A673 (cell line): ENCODE measurements at regions of chr7 and their contacts with region 1.

Region 1: DNA sequence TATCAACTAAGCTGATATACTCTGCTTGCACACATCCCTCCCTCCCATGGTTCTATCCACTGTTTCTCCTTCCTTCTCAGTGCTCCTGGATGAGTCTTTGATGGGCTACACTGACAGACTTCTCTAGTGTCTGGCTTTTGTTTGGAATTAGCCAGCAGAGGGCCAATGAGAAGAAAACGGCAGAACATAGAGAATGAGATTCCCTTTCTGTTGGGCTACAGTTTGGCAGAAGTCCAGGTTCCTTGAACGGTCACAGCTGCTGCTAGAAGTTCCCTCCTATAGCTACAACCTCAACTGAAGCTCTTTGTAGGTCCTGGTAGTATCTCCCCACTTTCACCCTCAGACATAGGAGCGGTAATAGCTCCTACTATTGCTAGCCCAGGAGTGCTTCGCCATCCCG is 251.1 kb upstream of the LRRN3 start:
- DNase-seq: peak; percentile 79
- H3K4me3 ChIP-seq: no peak overlapping the region
- H3K27ac ChIP-seq: no peak overlapping the region
- H3K4me1 ChIP-seq: no peaks in the 10 kb centered on the region
- H3K27me3 ChIP-seq: peaks cover 27% of the 10 kb centered on the region
- CTCF ChIP-seq: peak; percentile 33; the same call in 1 of the 2 replicates

Region 2: DNA sequence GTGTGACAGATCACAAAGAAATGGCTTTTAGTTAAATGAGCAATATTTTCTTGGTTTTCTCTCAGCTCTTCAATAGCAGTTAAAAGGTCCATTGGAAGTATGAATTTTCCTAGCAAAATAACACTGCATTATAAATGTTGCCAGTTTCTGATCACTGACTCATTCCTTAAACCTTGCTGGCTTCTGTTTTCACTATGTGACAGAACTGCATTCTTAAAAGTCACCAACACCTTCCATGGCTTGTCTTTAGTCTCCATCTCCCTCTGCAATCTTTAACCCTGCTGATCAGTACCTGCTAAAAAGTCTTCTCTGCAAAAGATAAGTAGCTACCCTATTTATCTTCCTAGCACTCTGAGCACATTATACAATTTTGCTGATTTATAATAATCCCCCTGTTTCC is 154.0 kb before region 1 on chr7:
- CTCF ChIA-PET with region 1: no interaction called
- POLR2A ChIA-PET with region 1: no interaction called
- intact Hi-C with region 1: no loop called
- DNase-seq: no peak
- H3K4me3 ChIP-seq: no peak overlapping the region
- H3K27ac ChIP-seq: no peak overlapping the region
- H3K4me1 ChIP-seq: no peaks in the 10 kb centered on the region
- H3K27me3 ChIP-seq: no peaks in the 10 kb centered on the region
- CTCF ChIP-seq: no peak

Region 3: DNA sequence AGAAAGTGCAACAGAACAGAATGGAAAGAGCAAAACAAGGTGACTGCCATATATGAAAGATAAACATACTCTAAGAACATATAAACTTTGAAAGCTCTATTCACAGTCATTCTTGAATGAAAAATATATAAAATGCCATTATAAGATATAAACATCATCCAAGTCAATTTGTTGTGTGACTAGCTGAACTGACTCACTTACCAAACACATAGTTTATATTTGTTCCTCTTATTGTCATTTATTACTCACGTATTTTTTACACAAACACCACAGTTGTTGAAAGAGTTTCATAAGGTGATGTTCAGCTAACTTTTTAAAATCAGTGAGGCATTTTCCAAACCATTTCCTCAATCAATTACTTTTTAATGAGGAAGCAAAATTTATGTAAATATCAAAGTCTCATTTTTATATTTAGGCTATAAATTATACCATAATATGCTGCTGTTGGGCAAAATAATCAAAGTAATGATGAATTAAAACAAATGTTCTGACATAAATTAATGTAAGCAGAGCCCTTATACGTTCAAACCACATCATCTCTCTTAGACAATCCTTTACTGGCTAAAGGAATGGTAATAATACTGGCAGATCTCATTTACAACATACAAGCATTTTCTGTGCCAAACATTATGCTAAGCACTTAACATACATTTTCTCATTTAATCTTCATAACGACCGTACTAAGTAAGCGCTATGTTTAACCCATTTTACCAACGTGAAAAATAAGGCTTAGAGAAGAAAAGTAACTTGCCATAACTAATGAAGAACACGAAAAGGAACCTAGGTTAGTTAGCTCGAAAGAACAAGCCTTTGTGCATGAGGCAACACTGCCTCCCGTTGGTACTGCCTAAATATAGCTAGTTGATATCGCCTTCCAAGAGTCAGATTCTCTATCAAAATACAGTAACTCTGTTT is 258.4 kb after region 1 on chr7:
- CTCF ChIA-PET with region 1: no interaction called
- POLR2A ChIA-PET with region 1: no interaction called
- intact Hi-C with region 1: loop called (anchors 10 kb)
- DNase-seq: peak; percentile 63
- H3K4me3 ChIP-seq: no peak overlapping the region
- H3K27ac ChIP-seq: no peak overlapping the region
- H3K4me1 ChIP-seq: no peaks in the 10 kb centered on the region
- H3K27me3 ChIP-seq: no peaks in the 10 kb centered on the region
- CTCF ChIP-seq: peak; percentile 79